CD8-positive, alpha-beta T cell (primary cell): ENCODE measurements at regions of chr5 and their contacts with region 1.

Region 1: DNA sequence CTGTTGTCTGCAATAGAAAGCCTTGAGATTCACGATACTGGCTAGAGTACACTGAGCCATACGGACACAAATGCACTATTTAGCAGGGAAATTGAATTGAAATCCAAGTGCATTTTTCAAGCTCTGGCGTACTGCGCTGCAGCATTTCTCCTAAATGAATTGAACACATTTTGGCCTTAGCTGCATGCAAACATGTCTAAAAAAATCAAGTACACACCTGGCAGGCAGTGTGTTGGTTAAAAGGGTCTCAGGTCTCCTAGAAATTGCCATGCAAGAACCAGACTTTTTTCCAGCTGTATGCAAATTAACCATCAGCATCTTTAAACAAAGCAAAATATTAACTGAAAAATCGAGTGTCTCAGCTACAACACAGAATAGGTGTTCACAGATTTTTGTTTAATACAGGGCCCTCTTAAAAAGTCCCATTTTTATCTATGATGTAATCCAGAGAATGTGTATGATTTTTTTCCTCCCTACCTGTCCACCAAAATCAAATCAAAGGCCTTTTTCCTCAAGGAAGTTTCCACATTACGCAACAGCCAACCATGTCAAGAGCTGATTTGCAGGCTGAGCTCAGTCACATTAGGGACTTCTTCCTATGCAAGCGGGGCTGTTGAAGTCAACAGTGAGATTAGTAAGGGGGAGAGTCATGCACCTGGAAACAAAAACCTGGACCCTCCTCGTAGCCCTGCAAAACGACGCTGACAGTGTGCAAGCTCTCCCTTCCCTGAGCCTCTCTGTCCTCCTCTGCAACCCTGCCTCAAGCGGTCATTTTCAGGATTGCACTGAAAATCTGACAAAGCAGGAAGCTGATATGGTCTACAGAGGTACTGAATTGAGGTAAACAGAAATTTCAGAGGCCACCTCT is 14.1 kb upstream of the SFXN1 start:
- DNase-seq: peak; percentile 35 to 76 (median 63)
- ATAC-seq: peak; percentile 98
- H3K4me3 ChIP-seq: no peak overlapping the region
- H3K4me3 Mint-ChIP-seq: peak overlapping the region; percentile 5
- H3K27ac ChIP-seq: no peak overlapping the region
- H3K27ac Mint-ChIP-seq: peak overlapping the region; percentile 62
- H3K4me1 ChIP-seq: peaks cover 7% of the 10 kb centered on the region
- H3K4me1 Mint-ChIP-seq: peaks cover 10% of the 10 kb centered on the region
- H3K27me3 ChIP-seq: no peaks in the 10 kb centered on the region
- H3K27me3 Mint-ChIP-seq: no peaks in the 10 kb centered on the region
- CTCF ChIP-seq: peak; percentile 78

Region 2: GRCh38 chr5:175478384-175479124 is 14.2 kb after region 1 on chr5 and contains the start of gene SFXN1:
- CTCF ChIA-PET with region 1: interaction called, 18 read pairs
- POLR2A ChIA-PET with region 1: interaction called, 7 read pairs
- intact Hi-C with region 1: loop called (anchors 2 kb)
- DNase-seq: peak; percentile 43 to 89 (median 75)
- ATAC-seq: peak; percentile 32
- H3K4me3 ChIP-seq: peak within 1 kb of the TSS; percentile 74 to 80
- H3K4me3 Mint-ChIP-seq: peak within 1 kb of the TSS; percentile 96
- H3K27ac ChIP-seq: peak within 1 kb of the TSS; percentile 67 to 75
- H3K27ac Mint-ChIP-seq: peak within 1 kb of the TSS; percentile 97
- H3K4me1 ChIP-seq: peaks cover 48% of the 10 kb centered on the region
- H3K4me1 Mint-ChIP-seq: peaks cover 49% of the 10 kb centered on the region
- H3K27me3 ChIP-seq: no peaks in the 10 kb centered on the region
- H3K27me3 Mint-ChIP-seq: no peaks in the 10 kb centered on the region
- CTCF ChIP-seq: no peak
- total RNA-seq, gene SFXN1: 169 to 174 TPM

Region 3: DNA sequence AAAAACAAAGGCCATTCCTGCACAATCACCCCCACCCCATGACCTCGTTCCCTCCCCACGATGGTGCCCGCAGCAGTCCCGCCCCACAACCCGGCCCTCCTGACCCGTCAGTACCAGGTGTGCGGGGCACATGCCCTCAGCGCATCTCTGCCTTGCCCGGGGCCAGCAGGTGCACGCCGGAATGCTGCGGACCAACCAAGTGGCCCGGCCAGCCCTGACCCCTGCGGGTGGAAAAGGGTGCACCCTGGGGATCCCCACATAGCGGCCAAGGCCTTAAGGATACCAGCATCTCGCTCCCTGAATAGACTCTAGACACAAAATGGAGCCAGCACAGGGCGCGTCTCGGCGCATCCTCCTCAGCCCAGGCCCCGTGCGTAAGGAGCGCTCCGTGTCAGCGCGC is 20.0 kb after region 1 on chr5:
- CTCF ChIA-PET with region 1: interaction called, 12 read pairs
- POLR2A ChIA-PET with region 1: interaction called, 6 read pairs
- intact Hi-C with region 1: loop called (anchors 2 kb)
- DNase-seq: peak in 1 of 9 experiments; percentile 40
- ATAC-seq: no peak
- H3K4me3 ChIP-seq: no peak overlapping the region
- H3K4me3 Mint-ChIP-seq: peak overlapping the region; percentile 69
- H3K27ac ChIP-seq: no peak overlapping the region
- H3K27ac Mint-ChIP-seq: peak overlapping the region; percentile 52
- H3K4me1 ChIP-seq: peaks cover 64% of the 10 kb centered on the region
- H3K4me1 Mint-ChIP-seq: peaks cover 91% of the 10 kb centered on the region
- H3K27me3 ChIP-seq: no peaks in the 10 kb centered on the region
- H3K27me3 Mint-ChIP-seq: no peaks in the 10 kb centered on the region
- CTCF ChIP-seq: no peak

Region 4: GRCh38 chr5:175501759-175502339 is 37.5 kb after region 1 on chr5:
- CTCF ChIA-PET with region 1: interaction called, 4 read pairs
- POLR2A ChIA-PET with region 1: no interaction called
- intact Hi-C with region 1: loop called in 1 of 2 experiments (anchors 5 kb)
- DNase-seq: peak in 1 of 9 experiments; percentile 23
- ATAC-seq: no peak
- H3K4me3 ChIP-seq: no peak overlapping the region
- H3K4me3 Mint-ChIP-seq: no peak overlapping the region
- H3K27ac ChIP-seq: no peak overlapping the region
- H3K27ac Mint-ChIP-seq: peak overlapping the region; percentile 64
- H3K4me1 ChIP-seq: peaks cover 2% of the 10 kb centered on the region
- H3K4me1 Mint-ChIP-seq: peaks cover 39% of the 10 kb centered on the region
- H3K27me3 ChIP-seq: no peaks in the 10 kb centered on the region
- H3K27me3 Mint-ChIP-seq: no peaks in the 10 kb centered on the region
- CTCF ChIP-seq: no peak

Region 5: GRCh38 chr5:175517818-175518450 is 53.6 kb after region 1 on chr5:
- CTCF ChIA-PET with region 1: interaction called, 6 read pairs
- POLR2A ChIA-PET with region 1: no interaction called
- intact Hi-C with region 1: loop called in 1 of 2 experiments (anchors 5 kb)
- DNase-seq: peak in 8 of 9 experiments; percentile 32 to 70 (median 51)
- ATAC-seq: peak; percentile 13
- H3K4me3 ChIP-seq: no peak overlapping the region
- H3K4me3 Mint-ChIP-seq: peak overlapping the region; percentile 35
- H3K27ac ChIP-seq: peak overlapping the region in 1 of 2 experiments; percentile 5
- H3K27ac Mint-ChIP-seq: peak overlapping the region; percentile 87
- H3K4me1 ChIP-seq: peaks cover 66% of the 10 kb centered on the region
- H3K4me1 Mint-ChIP-seq: peaks cover 75% of the 10 kb centered on the region
- H3K27me3 ChIP-seq: no peaks in the 10 kb centered on the region
- H3K27me3 Mint-ChIP-seq: no peaks in the 10 kb centered on the region
- CTCF ChIP-seq: no peak

Region 6: GRCh38 chr5:175526691-175527090 is 62.4 kb after region 1 on chr5:
- CTCF ChIA-PET with region 1: interaction called, 16 read pairs
- POLR2A ChIA-PET with region 1: interaction called, 4 read pairs
- intact Hi-C with region 1: loop called in 1 of 2 experiments (anchors 5 kb)
- DNase-seq: peak in 1 of 9 experiments; percentile 29
- ATAC-seq: no peak
- H3K4me3 ChIP-seq: no peak overlapping the region
- H3K4me3 Mint-ChIP-seq: no peak overlapping the region
- H3K27ac ChIP-seq: no peak overlapping the region
- H3K27ac Mint-ChIP-seq: no peak overlapping the region
- H3K4me1 ChIP-seq: peaks cover 33% of the 10 kb centered on the region
- H3K4me1 Mint-ChIP-seq: peaks cover 40% of the 10 kb centered on the region
- H3K27me3 ChIP-seq: no peaks in the 10 kb centered on the region
- H3K27me3 Mint-ChIP-seq: no peaks in the 10 kb centered on the region
- CTCF ChIP-seq: no peak